Ascending aorta (tissue), 2 donors: ENCODE measurements at regions of chr6 and their contacts with region 1.

Region 1: DNA sequence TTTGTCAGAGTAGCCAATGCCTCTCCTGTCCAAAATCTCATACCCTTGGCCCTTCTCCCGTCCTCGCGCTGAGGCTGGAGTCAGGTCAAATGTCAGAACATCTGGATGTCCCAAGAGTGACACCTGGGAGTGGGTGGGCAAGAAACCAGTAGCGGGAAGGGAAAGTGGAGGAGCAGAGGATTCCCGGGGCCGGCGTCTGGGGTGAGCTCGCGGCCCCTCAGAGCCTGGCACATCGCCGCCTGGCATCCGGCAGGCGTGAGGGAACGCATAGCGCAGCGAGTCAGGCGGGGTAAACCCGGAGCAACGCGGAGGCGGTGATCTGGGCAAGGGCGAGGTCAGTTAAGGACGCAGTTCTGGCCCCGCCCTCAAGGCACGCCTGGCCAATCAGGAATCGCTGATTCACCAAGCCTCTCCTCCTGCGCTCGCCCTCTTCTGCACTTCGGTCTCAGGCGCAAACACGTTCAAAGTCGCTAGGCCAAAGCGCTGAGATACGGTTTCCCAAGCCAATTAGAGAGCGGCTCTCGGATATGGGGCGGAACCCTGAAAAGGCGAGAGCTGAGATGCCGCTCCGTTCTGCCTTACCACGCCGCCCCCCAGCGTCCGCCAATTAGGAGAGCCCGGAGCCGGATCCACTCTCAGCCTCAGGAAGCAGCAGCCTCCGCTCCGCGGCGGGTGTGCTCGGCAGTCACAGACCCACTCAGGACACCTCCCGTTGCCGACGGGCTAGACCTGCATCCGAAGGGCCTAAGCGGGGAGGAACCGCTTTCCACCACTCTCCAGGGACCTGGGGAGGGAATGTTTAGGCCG is 22.5 kb downstream of the VPS52 start:
- DNase-seq: peak; percentile 97 to 99
- H3K4me3 ChIP-seq: peak overlapping the region; percentile 69
- H3K27ac ChIP-seq: peak overlapping the region; percentile 93 to 94
- H3K4me1 ChIP-seq: peaks cover 4 to 23% of the 10 kb centered on the region in 2 donors
- H3K27me3 ChIP-seq: no peaks in the 10 kb centered on the region
- CTCF ChIP-seq: no peak

Region 2: GRCh38 chr6:32843979-32844838 is 404.9 kb before region 1 on chr6 and contains the start of gene PSMB8:
- intact Hi-C with region 1: loop called (anchors 5 kb)
- DNase-seq: peak; percentile 92 to 99
- H3K4me3 ChIP-seq: peak within 1 kb of the TSS; percentile 69 to 97
- H3K27ac ChIP-seq: peak within 1 kb of the TSS; percentile 93 to 94
- H3K4me1 ChIP-seq: peaks cover 0 to 6% of the 10 kb centered on the region in 2 donors
- H3K27me3 ChIP-seq: no peaks in the 10 kb centered on the region
- CTCF ChIP-seq: peak in 2 of 3 experiments; percentile 22 to 27
- total RNA-seq, gene PSMB8: 18.4 TPM

Region 3: GRCh38 chr6:33014841-33015634 is 234.1 kb before region 1 on chr6:
- intact Hi-C with region 1: loop called (anchors 2 kb)
- DNase-seq: no peak
- H3K4me3 ChIP-seq: no peak overlapping the region
- H3K27ac ChIP-seq: no peak overlapping the region
- H3K4me1 ChIP-seq: peaks cover 4 to 10% of the 10 kb centered on the region in 2 donors
- H3K27me3 ChIP-seq: no peaks in the 10 kb centered on the region
- CTCF ChIP-seq: peak; percentile 77 to 80 (median 77)

Region 4: GRCh38 chr6:33161354-33162331 is 87.5 kb before region 1 on chr6:
- intact Hi-C with region 1: loop called (anchors 1 kb)
- DNase-seq: peak; percentile 38 to 90
- H3K4me3 ChIP-seq: peak overlapping the region; percentile 58 to 61
- H3K27ac ChIP-seq: peak overlapping the region; percentile 47 to 58
- H3K4me1 ChIP-seq: peaks cover 4% of the 10 kb centered on the region in 2 donors
- H3K27me3 ChIP-seq: no peaks in the 10 kb centered on the region
- CTCF ChIP-seq: peak; percentile 89 to 97 (median 92)

Region 5: DNA sequence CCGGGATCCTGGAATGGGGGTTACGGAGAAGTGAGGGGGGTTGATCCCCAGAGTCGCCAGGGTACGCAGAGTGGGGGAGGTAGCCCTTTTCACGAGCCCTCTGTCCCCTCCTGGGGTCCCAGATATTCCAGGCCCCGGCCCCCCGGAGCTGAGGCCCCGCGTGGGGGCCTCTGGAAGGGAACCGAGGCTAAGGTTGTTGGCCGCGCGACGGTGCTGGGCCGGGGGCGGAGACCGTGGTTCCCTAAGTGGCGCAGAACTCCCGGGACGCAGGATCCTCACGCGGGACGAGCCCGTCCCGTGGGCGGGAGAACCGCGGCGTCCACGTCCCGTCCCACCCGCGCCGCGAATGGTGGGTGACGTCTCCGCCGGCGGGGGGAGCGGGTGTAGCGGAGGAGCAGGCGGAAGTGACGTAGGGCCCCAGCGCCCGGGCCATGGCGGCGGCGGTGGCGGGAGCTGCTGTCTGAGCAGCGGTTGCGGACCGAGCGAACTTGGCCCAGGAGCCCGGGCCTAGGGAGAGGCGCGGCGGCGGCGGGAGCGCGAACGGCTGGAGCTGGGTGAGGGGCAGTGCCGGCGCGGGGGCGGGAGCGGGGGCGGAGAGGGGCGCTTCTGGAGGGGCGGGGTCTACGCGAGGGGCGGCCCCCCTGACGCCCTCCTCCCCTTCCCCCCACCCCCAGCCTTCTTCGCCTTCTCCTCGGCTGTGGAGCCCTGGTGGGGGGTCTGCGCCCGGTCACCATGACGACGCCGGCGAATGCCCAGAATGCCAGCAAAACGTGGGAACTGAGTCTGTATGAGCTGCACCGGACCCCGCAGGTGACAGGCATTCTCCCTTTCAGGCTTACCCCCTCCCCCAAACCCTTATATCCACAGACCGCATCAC is 40.8 kb before region 1 on chr6 and contains the start of gene RING1:
- intact Hi-C with region 1: loop called (anchors 1 kb)
- DNase-seq: peak; percentile 51 to 94
- H3K4me3 ChIP-seq: peak within 1 kb of the TSS; percentile 84 to 88
- H3K27ac ChIP-seq: peak within 1 kb of the TSS; percentile 94 to 95
- H3K4me1 ChIP-seq: peaks cover under 1 to 20% of the 10 kb centered on the region in 2 donors
- H3K27me3 ChIP-seq: no peaks in the 10 kb centered on the region
- CTCF ChIP-seq: no peak
- total RNA-seq, gene RING1: 28.5 TPM

Region 6: DNA sequence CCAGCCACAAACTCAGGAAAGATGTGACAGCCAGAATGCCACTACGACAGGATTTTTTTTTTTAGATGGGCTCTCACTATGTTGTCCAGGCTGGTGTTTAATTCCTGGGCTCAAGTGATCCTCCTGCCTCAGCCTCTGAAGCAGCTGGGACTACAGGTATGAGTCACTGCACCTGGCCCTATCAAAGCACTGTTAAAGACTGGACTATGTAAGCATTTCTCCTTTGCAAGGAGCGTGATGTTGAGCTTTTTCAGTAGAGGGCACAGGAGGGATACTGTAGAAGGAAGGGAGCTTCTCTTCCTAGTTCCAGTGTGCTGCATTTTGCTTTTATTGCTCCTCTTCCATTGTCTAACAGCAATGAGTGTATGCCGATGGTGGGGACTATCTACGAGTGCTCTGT is 241.1 kb after region 1 on chr6:
- intact Hi-C with region 1: no loop called
- DNase-seq: no peak
- H3K4me3 ChIP-seq: no peak overlapping the region
- H3K27ac ChIP-seq: no peak overlapping the region
- H3K4me1 ChIP-seq: no peaks in the 10 kb centered on the region
- H3K27me3 ChIP-seq: no peaks in the 10 kb centered on the region
- CTCF ChIP-seq: no peak

Region 7: DNA sequence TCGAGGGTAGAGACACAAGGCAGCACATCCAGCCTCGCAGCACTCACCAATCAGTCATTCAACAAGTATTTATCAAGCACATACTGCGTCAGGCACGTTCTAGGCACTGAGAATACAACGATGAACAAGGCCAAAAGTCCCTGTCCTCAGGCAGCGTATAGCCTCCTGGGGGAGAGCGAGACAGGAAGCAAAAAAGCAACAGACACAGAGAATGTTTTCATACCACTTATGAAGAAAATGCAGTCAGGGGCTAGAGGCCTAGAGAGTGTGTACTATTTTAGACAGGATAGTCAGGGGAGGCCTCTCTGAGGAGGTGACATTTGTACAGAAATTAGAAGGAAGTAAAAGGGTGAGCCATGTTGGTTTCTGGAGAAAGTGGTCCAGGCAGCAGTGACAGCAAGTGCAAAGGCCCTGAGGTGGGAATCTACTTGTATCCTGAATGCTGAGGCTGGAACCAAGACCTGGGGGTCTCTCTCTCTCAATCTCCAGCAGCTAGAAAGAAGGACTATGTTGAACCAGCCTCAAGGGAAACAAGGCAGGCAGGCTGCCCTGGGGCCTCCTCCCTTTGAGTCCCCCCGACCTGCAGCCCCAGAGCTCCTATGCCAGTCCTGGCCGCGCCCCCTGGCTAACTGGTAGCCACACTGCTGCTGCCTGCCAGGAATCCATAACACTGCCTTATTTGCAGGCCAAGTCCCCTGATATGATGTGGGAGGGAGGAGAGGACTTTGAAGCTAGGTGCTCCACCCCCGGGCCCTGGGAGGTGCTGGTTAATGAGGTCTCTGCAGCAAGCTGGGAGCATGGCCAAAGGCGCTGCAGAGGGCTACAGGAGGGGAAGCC is 745.6 kb after region 1 on chr6:
- intact Hi-C with region 1: no loop called
- DNase-seq: peak in 1 of 2 donors; percentile 13
- H3K4me3 ChIP-seq: no peak overlapping the region
- H3K27ac ChIP-seq: no peak overlapping the region
- H3K4me1 ChIP-seq: no peaks in the 10 kb centered on the region
- H3K27me3 ChIP-seq: no peaks in the 10 kb centered on the region
- CTCF ChIP-seq: no peak

Region 8: GRCh38 chr6:34055223-34055933 is 806.2 kb after region 1 on chr6:
- intact Hi-C with region 1: no loop called
- DNase-seq: no peak
- H3K4me3 ChIP-seq: no peak overlapping the region
- H3K27ac ChIP-seq: no peak overlapping the region
- H3K4me1 ChIP-seq: no peaks in the 10 kb centered on the region
- H3K27me3 ChIP-seq: no peaks in the 10 kb centered on the region
- CTCF ChIP-seq: peak; percentile 5 to 48 (median 33)